HEK293 (cell line): ENCODE measurements at regions of chr19 and their contacts with region 1.

Region 1: GRCh38 chr19:45994989-45995714 is at the start of gene CCDC61:
- H3K4me3 ChIP-seq: peak within 1 kb of the TSS; percentile 62
- H3K27ac ChIP-seq: no peak within 1 kb of the TSS; the same call in 1 of the 2 replicates
- H3K4me1 ChIP-seq: peaks cover 12% of the 10 kb centered on the region
- CTCF ChIP-seq: no peak

Region 2: DNA sequence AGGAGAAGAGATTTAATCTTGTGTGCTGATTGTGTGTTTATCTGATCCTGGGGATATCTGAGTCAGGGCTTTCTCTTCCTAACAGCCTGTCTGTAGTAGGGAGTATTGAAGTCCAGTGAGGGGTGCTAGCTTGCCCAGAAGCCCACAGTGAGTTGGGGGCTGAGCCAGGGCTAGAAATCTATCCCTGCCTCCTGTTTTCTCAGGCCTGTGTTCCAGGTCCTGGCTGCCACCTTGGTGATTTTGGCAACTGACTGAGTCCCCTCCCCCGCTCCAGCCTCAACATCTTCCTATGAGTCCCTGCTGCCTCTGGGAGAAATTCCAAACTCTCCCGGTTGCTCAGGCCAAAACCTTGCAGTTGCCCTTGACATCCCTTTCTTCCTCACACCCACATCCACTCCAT is 13.8 kb before region 1 on chr19:
- CTCF ChIA-PET with region 1: interaction called, 5 read pairs
- POLR2A ChIA-PET with region 1: interaction called, 10 read pairs
- H3K4me3 ChIP-seq: no peak overlapping the region
- H3K27ac ChIP-seq: no peak overlapping the region
- H3K4me1 ChIP-seq: no peaks in the 10 kb centered on the region
- CTCF ChIP-seq: no peak

Region 3: DNA sequence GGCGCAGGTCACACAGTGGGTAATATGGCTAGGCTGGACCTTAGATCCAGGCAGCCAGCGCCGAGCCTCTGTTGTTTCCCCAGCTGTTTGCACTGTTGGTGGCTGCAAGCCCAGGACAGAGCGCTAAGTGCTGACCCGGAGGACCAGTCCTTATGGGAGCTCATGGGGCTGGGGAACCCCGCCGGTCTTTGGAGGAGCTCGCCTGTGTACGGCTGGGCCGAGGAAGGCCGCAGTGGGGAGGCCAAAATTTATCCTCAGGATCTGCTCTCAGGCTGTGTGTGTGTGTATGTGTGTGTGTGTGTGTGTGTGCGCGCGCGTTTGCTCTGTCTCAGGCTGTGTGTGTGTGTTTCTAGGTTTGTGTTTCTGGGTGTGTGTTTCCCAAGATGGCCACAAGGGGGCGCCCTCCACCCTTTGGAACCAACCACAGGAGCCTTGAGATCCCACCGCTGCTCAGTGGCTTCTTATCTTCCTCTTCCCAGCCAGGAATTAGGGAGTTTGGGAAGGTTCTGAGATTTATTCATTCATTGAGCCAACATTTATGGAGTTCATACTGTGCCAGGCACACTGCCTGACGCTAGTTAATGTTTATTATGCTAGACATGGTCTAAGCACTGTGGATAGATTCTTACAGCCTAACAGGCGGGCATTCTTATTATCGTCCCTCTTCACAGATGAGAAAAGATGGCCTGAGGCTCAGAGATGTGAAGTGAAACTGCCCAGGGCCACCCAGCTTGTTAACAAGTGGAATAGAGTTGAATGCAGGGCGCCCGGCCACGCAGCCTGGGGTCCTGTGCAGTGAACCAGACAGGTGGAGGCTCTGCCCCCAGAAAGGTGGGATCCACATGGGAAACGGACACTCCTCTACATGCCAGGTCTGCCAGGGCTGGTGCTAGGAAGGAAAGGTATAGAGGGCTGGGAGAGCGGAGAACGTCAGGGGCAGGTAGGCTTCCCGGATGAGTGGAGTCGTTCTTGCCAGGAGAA is 14.7 kb after region 1 on chr19:
- CTCF ChIA-PET with region 1: interaction called, 26 read pairs
- POLR2A ChIA-PET with region 1: interaction called, 4 read pairs
- H3K4me3 ChIP-seq: no peak overlapping the region
- H3K27ac ChIP-seq: no peak overlapping the region
- H3K4me1 ChIP-seq: no peaks in the 10 kb centered on the region
- CTCF ChIP-seq: peak; percentile 87